T-cell (primary cell): ENCODE measurements at regions of chr1 and their contacts with region 1.

Region 1: GRCh38 chr1:201505505-201505893 is 1.4 kb downstream of the CSRP1 start:
- DNase-seq: no peak
- ATAC-seq: no peak
- H3K4me3 ChIP-seq: peak overlapping the region in 1 of 2 donors; percentile 15
- H3K4me3 Mint-ChIP-seq: peak overlapping the region; percentile 85 to 92 (median 88)
- H3K27ac ChIP-seq: no peak overlapping the region
- H3K27ac Mint-ChIP-seq: peak overlapping the region; percentile 46 to 89
- H3K4me1 ChIP-seq: peaks cover 16 to 32% of the 10 kb centered on the region in 2 experiments
- H3K4me1 Mint-ChIP-seq: peaks cover 33 to 49% (median 42%) of the 10 kb centered on the region in 3 donors
- H3K27me3 ChIP-seq: no peaks in the 10 kb centered on the region
- H3K27me3 Mint-ChIP-seq: no peaks in the 10 kb centered on the region

Region 2: DNA sequence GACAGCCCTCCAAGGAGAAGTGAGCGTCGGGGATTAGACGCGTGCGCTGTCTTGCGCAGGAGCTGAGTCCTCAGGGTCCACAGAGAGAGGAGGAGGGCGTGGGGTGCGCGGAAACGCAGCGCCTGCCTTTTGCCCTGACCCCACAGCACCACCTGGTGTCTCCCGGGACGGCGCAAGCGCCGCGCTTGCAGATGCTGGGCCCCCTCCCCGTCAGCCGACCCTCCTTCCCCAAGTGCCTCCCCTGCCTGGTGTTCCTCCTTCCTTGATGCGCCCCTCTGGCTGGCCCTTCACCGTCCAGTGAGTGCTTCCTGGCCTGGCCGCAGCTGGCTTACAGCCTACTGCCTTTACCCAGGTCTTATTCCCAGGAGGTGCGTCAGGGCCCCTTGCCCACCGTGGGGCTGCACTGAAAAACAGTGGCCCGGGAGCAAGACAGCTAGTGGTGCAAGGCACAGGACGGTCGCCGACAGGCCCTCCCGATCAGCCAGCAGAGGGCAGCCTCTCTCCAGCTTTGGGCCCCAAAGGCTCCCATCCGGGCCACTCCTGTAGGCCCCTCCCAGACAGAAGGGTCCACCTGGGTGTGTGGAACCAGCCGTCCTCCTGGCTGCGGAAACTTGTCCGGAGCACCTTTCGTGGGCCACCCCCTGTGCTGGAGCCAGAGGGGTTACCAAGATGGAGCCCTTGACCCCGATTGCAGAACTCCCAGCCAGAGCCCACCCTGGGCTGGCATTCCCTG is 23.6 kb before region 1 on chr1:
- CTCF ChIA-PET with region 1: interaction called, 4 to 83 read pairs
- POLR2A ChIA-PET with region 1: interaction called in 1 of 2 experiments, 4 read pairs
- DNase-seq: peak; percentile 51 to 83 (median 73)
- ATAC-seq: peak; percentile 83 to 86 (median 85)
- H3K4me3 ChIP-seq: peak overlapping the region; percentile 9 to 66
- H3K4me3 Mint-ChIP-seq: peak overlapping the region; percentile 65 to 86 (median 73)
- H3K27ac ChIP-seq: no peak overlapping the region
- H3K27ac Mint-ChIP-seq: no peak overlapping the region
- H3K4me1 ChIP-seq: peaks cover 7 to 25% of the 10 kb centered on the region in 2 experiments
- H3K4me1 Mint-ChIP-seq: peaks cover 19 to 25% (median 20%) of the 10 kb centered on the region in 3 donors
- H3K27me3 ChIP-seq: peaks cover 2 to 21% of the 10 kb centered on the region in 2 experiments
- H3K27me3 Mint-ChIP-seq: peaks cover 10% of the 10 kb centered on the region in 2 donors